SK-N-SH (cell line): ENCODE measurements at regions of chr11 and their contacts with region 1.

Region 1: DNA sequence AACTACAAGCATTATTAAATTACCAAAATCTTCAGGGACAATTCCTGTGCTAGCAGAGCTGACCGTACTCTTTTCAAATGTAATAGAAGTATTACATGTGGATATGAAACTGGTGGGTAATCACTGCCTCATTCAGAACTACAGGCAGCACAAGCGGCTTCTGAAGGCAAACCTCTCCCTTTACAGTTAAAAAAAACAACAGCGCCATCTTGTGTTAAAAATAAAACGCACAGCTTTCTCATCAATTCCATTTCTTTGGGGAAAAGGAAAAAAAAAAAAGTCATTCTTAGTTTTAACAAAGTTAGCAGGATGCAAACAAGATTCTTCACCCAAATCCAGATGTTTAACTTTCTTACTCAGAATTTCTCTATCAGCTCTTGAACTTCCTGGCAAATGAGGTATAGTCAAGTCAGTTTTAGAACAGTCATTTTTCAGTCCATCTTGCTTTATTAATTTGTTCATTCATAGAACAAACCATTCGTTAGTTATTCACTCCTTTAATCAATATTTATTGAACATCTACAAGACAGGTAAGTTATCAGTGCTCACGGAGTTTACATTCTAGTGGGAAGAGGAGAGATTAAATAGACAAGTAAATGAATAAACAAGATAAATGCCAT is 331.8 kb upstream of the MPPED2 start:
- DNase-seq: peak; percentile 36
- H3K4me3 ChIP-seq: no peak overlapping the region
- H3K27ac ChIP-seq: no peak overlapping the region
- H3K4me1 ChIP-seq: peaks cover 0 to 5% of the 10 kb centered on the region in 2 experiments; a peak in 2 of 4 replicates
- H3K27me3 ChIP-seq: no peaks in the 10 kb centered on the region
- CTCF ChIP-seq: peak; percentile 83
- EP300 ChIP-seq: no peak
- RAD21 ChIP-seq: peak; percentile 91

Region 2: GRCh38 chr11:30322826-30323710 is 594.9 kb before region 1 on chr11 and contains the start of gene ARL14EP:
- CTCF ChIA-PET with region 1: interaction called, 3 read pairs
- POLR2A ChIA-PET with region 1: interaction called, 11 read pairs
- DNase-seq: peak; percentile 89
- H3K4me3 ChIP-seq: peak within 1 kb of the TSS; percentile 73 to 89
- H3K27ac ChIP-seq: peak within 1 kb of the TSS; percentile 74 to 78
- H3K4me1 ChIP-seq: peaks cover 12 to 25% of the 10 kb centered on the region in 2 experiments; a peak in 3 of 4 replicates
- H3K27me3 ChIP-seq: no peaks in the 10 kb centered on the region
- CTCF ChIP-seq: no peak
- EP300 ChIP-seq: peak in 1 of 2 experiments; percentile 64; a peak in 1 of 4 replicates
- RAD21 ChIP-seq: no peak
- polyA plus RNA-seq, gene ARL14EP: 7.0 and 11.2 TPM in 2 replicates

Region 3: GRCh38 chr11:30346068-30346688 is 571.8 kb before region 1 on chr11:
- CTCF ChIA-PET with region 1: interaction called, 45 read pairs
- POLR2A ChIA-PET with region 1: no interaction called
- DNase-seq: peak; percentile 43
- H3K4me3 ChIP-seq: no peak overlapping the region
- H3K27ac ChIP-seq: no peak overlapping the region
- H3K4me1 ChIP-seq: no peaks in the 10 kb centered on the region; a peak in 1 of 4 replicates
- H3K27me3 ChIP-seq: no peaks in the 10 kb centered on the region
- CTCF ChIP-seq: peak; percentile 74
- EP300 ChIP-seq: no peak
- RAD21 ChIP-seq: peak; percentile 85

Region 4: DNA sequence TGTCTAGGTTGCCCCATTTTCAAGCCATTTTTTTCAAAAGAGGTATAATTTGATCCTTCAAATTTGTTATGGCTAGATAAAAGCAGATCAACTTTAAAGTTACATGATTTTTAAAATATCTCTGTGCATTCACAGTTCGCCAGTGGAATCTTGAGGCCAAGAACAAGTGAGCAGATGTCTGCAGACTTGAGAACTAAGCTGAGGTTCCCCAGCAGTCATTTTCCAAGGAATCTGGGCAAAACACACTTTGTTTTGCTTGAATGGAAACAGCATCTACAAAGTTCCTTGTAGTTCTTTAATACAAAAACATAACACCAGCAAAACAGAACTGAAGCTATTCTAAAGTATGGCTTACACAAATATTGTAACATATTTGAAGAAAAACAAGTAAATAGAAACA is 339.6 kb before region 1 on chr11:
- CTCF ChIA-PET with region 1: no interaction called
- POLR2A ChIA-PET with region 1: no interaction called
- DNase-seq: no peak
- H3K4me3 ChIP-seq: no peak overlapping the region
- H3K27ac ChIP-seq: no peak overlapping the region
- H3K4me1 ChIP-seq: no peaks in the 10 kb centered on the region
- H3K27me3 ChIP-seq: peaks cover 6% of the 10 kb centered on the region; the same call in 1 of the 2 replicates
- CTCF ChIP-seq: no peak
- EP300 ChIP-seq: no peak
- RAD21 ChIP-seq: no peak

Region 5: DNA sequence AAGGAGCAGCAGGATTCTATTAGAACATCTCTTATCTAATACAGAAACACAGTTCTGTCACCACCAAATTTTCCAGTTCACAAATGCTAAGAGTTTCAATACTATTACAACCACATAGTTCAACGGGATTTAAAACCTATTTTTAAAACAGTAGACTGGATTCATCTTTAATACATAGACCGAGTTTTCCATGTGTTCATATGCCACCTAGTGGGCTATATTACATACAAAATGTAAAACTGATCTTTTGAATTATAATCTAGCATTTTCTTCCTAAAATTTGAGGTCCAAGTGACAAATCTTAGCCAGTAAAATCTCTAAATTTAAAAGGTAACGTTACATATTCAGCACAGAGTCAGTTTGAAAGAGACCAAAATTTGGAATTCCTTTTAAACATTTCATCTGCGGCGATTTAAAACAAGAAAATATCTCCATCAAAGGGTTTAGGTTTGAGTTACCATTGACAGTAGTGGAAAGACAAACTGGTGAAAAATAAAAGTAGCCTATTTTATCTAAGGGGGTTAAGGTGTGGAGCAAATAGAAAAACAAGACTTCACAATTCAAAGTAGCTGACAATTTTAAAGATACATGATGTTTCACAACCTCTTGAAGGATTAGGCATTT is 62.5 kb before region 1 on chr11:
- CTCF ChIA-PET with region 1: interaction called, 113 read pairs
- POLR2A ChIA-PET with region 1: interaction called, 15 read pairs
- DNase-seq: peak; percentile 12
- H3K4me3 ChIP-seq: no peak overlapping the region
- H3K27ac ChIP-seq: no peak overlapping the region
- H3K4me1 ChIP-seq: peaks cover 0 to 12% of the 10 kb centered on the region in 2 experiments; a peak in 3 of 4 replicates
- H3K27me3 ChIP-seq: no peaks in the 10 kb centered on the region
- CTCF ChIP-seq: peak; percentile 54
- EP300 ChIP-seq: no peak
- RAD21 ChIP-seq: peak; percentile 76

Region 6: GRCh38 chr11:30879322-30880005 is 38.5 kb before region 1 on chr11:
- CTCF ChIA-PET with region 1: interaction called, 10 read pairs
- POLR2A ChIA-PET with region 1: no interaction called
- DNase-seq: peak; percentile 6
- H3K4me3 ChIP-seq: no peak overlapping the region
- H3K27ac ChIP-seq: peak overlapping the region in 1 of 2 experiments; percentile 62; a peak in 2 of 4 replicates
- H3K4me1 ChIP-seq: peaks cover 0 to 17% of the 10 kb centered on the region in 2 experiments; a peak in 3 of 4 replicates
- H3K27me3 ChIP-seq: no peaks in the 10 kb centered on the region
- CTCF ChIP-seq: no peak
- EP300 ChIP-seq: 0 out of 4 replicates have a peak, but pooled peaks of 1 of the 2 experiments have one; percentile 23
- RAD21 ChIP-seq: no peak

Region 7: DNA sequence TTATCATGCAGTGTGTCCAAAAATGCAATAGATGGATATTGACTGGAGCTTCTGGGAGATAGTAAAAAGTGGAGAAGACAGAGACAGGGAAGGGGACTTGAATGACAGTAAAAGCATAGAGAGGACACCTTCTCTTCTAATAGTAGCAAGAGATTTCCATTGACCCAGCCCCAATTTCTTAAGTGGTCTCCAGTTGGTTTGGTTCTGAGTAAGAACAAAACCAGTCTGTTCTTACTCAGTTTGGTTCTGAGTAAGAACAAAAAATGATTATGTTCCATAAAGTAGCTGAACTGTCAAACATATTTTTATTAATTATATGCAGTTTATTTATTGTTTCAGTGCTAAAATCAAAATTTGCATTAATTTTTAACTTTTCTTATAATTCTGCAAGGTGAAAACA is 15.0 kb before region 1 on chr11:
- CTCF ChIA-PET with region 1: interaction called, 28 read pairs
- POLR2A ChIA-PET with region 1: no interaction called
- DNase-seq: no peak
- H3K4me3 ChIP-seq: no peak overlapping the region
- H3K27ac ChIP-seq: no peak overlapping the region
- H3K4me1 ChIP-seq: no peaks in the 10 kb centered on the region
- H3K27me3 ChIP-seq: no peaks in the 10 kb centered on the region
- CTCF ChIP-seq: no peak
- EP300 ChIP-seq: no peak
- RAD21 ChIP-seq: no peak